ENCODE measurements at regions of chr6 and their contacts with region 1.

Region 1: GRCh38 chr6:32700391-32701040 is 34.1 kb upstream of the HLA-DQB1 start:
- DNase-seq: no peak
- ATAC-seq: peak; percentile 70
- H3K4me3 Mint-ChIP-seq: no peak overlapping the region
- H3K27ac Mint-ChIP-seq: no peak overlapping the region
- H3K4me1 Mint-ChIP-seq: peaks cover 5% of the 10 kb centered on the region
- H3K27me3 Mint-ChIP-seq: peaks cover 74% of the 10 kb centered on the region

Region 2: GRCh38 chr6:32424589-32425300 is 275.8 kb before region 1 on chr6:
- CTCF ChIA-PET with region 1: interaction called, 13 read pairs
- DNase-seq: no peak
- ATAC-seq: no peak
- H3K4me3 Mint-ChIP-seq: no peak overlapping the region
- H3K27ac Mint-ChIP-seq: no peak overlapping the region
- H3K4me1 Mint-ChIP-seq: no peaks in the 10 kb centered on the region
- H3K27me3 Mint-ChIP-seq: peaks cover 44% of the 10 kb centered on the region

Region 3: DNA sequence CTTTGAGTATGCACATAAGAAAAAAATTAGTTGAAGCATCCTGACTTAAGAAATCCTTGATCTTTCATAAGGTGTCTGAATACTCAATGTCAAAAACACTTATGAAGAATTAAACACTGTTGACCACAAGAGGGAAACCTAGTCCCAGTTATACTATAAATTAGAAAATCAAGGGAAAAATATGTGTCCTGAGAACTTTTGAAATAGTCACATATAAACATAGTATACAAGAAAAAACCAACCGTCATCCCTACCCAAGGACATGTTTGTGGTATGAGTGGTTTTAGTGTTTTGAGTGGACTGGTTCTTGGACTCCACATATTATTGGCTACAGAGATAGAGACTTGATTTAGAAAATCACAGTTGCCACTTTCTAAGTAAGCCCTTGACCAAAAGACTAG is 268.5 kb before region 1 on chr6:
- CTCF ChIA-PET with region 1: interaction called, 20 read pairs
- DNase-seq: no peak
- ATAC-seq: peak; percentile 42
- H3K4me3 Mint-ChIP-seq: no peak overlapping the region
- H3K27ac Mint-ChIP-seq: no peak overlapping the region
- H3K4me1 Mint-ChIP-seq: peaks cover 2% of the 10 kb centered on the region
- H3K27me3 Mint-ChIP-seq: peaks cover 26% of the 10 kb centered on the region

Region 4: GRCh38 chr6:32785781-32786533 is 85.4 kb after region 1 on chr6:
- CTCF ChIA-PET with region 1: interaction called, 39 read pairs
- DNase-seq: no peak
- ATAC-seq: peak; percentile 78
- H3K4me3 Mint-ChIP-seq: no peak overlapping the region
- H3K27ac Mint-ChIP-seq: no peak overlapping the region
- H3K4me1 Mint-ChIP-seq: peaks cover 2% of the 10 kb centered on the region
- H3K27me3 Mint-ChIP-seq: peaks cover 74% of the 10 kb centered on the region

Region 5: DNA sequence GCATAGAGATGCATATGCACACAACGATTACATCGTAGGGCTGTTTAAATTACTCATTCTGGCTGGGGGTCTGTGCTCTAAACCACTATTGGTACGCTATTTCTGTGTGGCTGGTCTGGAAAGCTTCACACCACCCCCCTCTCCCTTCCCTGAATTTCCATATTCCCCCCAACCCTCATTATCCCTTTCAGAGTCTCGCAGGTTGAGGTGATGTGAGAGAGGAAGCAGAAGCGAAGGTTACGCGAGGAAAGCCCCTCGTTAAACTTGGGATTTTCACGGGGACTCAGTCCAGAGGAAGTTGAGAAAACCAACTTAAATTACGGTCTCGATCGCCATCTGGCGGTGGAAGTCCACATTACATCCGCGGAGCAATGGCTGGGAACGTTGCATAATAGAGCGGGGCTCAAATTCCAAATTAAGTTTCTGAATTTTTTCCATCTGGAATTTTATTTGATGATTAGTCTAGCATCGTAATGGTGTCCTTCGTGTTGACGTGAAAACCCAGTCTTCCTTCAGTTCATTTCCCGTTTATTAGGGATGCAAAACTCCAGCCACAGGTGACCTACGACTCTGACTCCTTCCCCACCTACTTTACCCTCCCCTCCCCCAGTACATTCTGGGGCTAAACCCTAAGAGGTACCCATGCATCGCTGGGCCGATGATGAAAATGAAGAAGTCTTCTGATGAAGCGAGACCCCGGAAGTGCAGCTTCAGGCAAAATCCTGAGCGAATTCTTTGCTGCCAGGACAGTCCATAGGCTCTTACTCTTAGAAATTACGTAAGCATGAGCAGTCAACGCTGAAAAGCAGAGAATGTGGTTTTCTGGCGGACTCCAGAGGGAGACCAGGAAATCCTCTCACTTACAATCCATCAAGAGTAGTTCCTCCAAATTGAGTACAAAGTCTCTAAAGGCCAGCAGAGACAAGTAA is 96.6 kb after region 1 on chr6:
- CTCF ChIA-PET with region 1: interaction called, 10 read pairs
- DNase-seq: peak; percentile 83
- ATAC-seq: peak; percentile 77
- H3K4me3 Mint-ChIP-seq: peak overlapping the region; percentile 61
- H3K27ac Mint-ChIP-seq: no peak overlapping the region
- H3K4me1 Mint-ChIP-seq: peaks cover 29% of the 10 kb centered on the region
- H3K27me3 Mint-ChIP-seq: peaks cover 81% of the 10 kb centered on the region

Measured in activated CD8-positive, alpha-beta memory T cell treated with anti-CD3 and anti-CD28 coated beads, Interleukin-2, amount 10 ng/mL, durations not matched to agents 7 days and 5 days (primary cell).